Caco-2 (cell line): ENCODE measurements at regions of chr4 and their contacts with region 1.

Region 1: DNA sequence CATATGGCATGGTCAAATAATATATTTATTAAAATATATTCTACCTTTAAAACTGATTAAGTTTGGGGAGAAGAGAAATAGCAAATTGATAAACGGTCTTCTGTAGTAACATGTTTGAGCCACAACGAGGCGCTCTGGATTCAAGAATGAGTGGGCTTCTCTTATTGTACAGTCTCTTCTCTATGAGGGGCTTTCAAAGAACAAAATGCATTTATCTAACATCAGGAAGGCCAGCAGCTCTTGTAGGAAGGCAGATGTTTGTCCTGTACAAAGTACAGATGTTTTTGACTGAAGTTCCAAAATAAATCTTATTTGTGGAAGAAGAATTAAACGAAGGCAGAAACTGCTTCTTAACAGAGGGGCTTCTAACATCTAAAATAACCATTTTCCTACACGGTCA is 153.6 kb downstream of the RASL11B start:
- DNase-seq: peak in 1 of 2 experiments; percentile 44
- H3K4me3 ChIP-seq: no peak overlapping the region
- H3K4me3 Mint-ChIP-seq: no peak overlapping the region
- H3K27ac Mint-ChIP-seq: no peak overlapping the region
- H3K4me1 ChIP-seq: peaks cover 38% of the 10 kb centered on the region
- H3K4me1 Mint-ChIP-seq: peaks cover 13% of the 10 kb centered on the region
- H3K27me3 ChIP-seq: no peaks in the 10 kb centered on the region
- H3K27me3 Mint-ChIP-seq: no peaks in the 10 kb centered on the region
- CTCF ChIP-seq: peak; percentile 70 to 74

Region 2: DNA sequence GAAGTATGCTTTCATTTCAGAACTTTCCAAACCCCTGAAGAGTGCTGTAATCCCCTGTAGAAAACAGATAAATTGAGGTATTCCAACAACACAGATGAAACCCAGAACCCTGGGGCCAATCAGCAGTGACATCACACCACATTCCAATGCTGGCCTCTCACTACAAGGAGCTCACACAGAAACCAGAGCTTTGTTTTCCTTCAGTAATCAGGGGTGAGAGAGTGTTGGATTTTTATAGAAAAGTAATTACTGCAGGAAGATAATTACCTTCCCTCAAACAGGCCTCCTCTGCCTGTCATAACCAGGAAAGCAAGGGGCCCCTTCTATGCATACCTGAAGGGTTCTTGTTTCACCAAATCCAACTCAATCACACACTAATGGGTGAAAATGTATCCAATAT is 104.0 kb after region 1 on chr4:
- CTCF ChIA-PET with region 1: no interaction called
- POLR2A ChIA-PET with region 1: interaction called, 5 read pairs
- intact Hi-C with region 1: loop called (anchors 1 kb)
- DNase-seq: peak; percentile 65 to 75
- H3K4me3 ChIP-seq: no peak overlapping the region
- H3K4me3 Mint-ChIP-seq: no peak overlapping the region
- H3K27ac Mint-ChIP-seq: peak overlapping the region; percentile 79
- H3K4me1 ChIP-seq: peaks cover 37% of the 10 kb centered on the region
- H3K4me1 Mint-ChIP-seq: no peaks in the 10 kb centered on the region
- H3K27me3 ChIP-seq: no peaks in the 10 kb centered on the region
- H3K27me3 Mint-ChIP-seq: no peaks in the 10 kb centered on the region
- CTCF ChIP-seq: no peak

Region 3: GRCh38 chr4:53313510-53313909 is 297.8 kb after region 1 on chr4:
- CTCF ChIA-PET with region 1: no interaction called
- POLR2A ChIA-PET with region 1: no interaction called
- intact Hi-C with region 1: loop called (anchors 1 kb)
- DNase-seq: peak; percentile 38 to 48
- H3K4me3 ChIP-seq: no peak overlapping the region
- H3K4me3 Mint-ChIP-seq: no peak overlapping the region
- H3K27ac Mint-ChIP-seq: no peak overlapping the region
- H3K4me1 ChIP-seq: no peaks in the 10 kb centered on the region
- H3K4me1 Mint-ChIP-seq: peaks cover 13% of the 10 kb centered on the region
- H3K27me3 ChIP-seq: no peaks in the 10 kb centered on the region
- H3K27me3 Mint-ChIP-seq: no peaks in the 10 kb centered on the region
- CTCF ChIP-seq: peak in 1 of 2 experiments; percentile 54

Region 4: GRCh38 chr4:53459548-53459947 is 443.9 kb after region 1 on chr4:
- CTCF ChIA-PET with region 1: no interaction called
- POLR2A ChIA-PET with region 1: no interaction called
- intact Hi-C with region 1: loop called (anchors 10 kb)
- DNase-seq: peak; percentile 59 to 60
- H3K4me3 ChIP-seq: no peak overlapping the region
- H3K4me3 Mint-ChIP-seq: peak overlapping the region; percentile 34
- H3K27ac Mint-ChIP-seq: peak overlapping the region; percentile 75
- H3K4me1 ChIP-seq: peaks cover 50% of the 10 kb centered on the region
- H3K4me1 Mint-ChIP-seq: peaks cover 20% of the 10 kb centered on the region
- H3K27me3 ChIP-seq: no peaks in the 10 kb centered on the region
- H3K27me3 Mint-ChIP-seq: no peaks in the 10 kb centered on the region
- CTCF ChIP-seq: no peak

Region 5: GRCh38 chr4:53614591-53614990 is 598.9 kb after region 1 on chr4:
- CTCF ChIA-PET with region 1: no interaction called
- POLR2A ChIA-PET with region 1: no interaction called
- intact Hi-C with region 1: loop called (anchors 1 kb)
- DNase-seq: peak; percentile 63
- H3K4me3 ChIP-seq: no peak overlapping the region
- H3K4me3 Mint-ChIP-seq: no peak overlapping the region
- H3K27ac Mint-ChIP-seq: no peak overlapping the region
- H3K4me1 ChIP-seq: peaks cover 21% of the 10 kb centered on the region
- H3K4me1 Mint-ChIP-seq: no peaks in the 10 kb centered on the region
- H3K27me3 ChIP-seq: no peaks in the 10 kb centered on the region
- H3K27me3 Mint-ChIP-seq: no peaks in the 10 kb centered on the region
- CTCF ChIP-seq: peak; percentile 46

Region 6: DNA sequence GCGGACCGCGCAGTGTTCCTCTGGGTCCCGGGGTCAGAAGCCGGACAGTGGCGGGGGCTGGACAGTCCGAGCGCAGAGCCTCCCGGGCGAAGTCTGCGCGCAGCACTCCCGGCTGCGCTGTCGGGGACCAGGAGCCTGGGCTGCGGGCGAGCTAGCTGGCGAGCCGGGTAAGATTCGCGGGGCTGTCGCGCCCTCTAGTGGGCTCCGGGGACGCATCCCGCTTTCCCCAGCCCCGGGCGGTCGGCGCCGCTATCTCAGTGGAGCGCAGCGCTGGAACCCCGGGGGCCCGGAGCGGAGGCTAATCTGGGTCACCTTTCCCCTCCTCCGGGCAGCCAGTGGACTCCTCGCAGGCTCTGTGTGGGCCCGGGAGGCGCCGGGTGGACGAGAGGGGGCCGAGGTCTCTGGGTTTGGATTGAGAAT is 1217.6 kb after region 1 on chr4:
- CTCF ChIA-PET with region 1: interaction called, 9 read pairs
- POLR2A ChIA-PET with region 1: no interaction called
- intact Hi-C with region 1: loop called (anchors 2 kb)
- DNase-seq: peak; percentile 80 to 87
- H3K4me3 ChIP-seq: peak overlapping the region; percentile 75
- H3K4me3 Mint-ChIP-seq: peak overlapping the region; percentile 87
- H3K27ac Mint-ChIP-seq: no peak overlapping the region
- H3K4me1 ChIP-seq: peaks cover 6% of the 10 kb centered on the region
- H3K4me1 Mint-ChIP-seq: peaks cover 9% of the 10 kb centered on the region
- H3K27me3 ChIP-seq: no peaks in the 10 kb centered on the region
- H3K27me3 Mint-ChIP-seq: no peaks in the 10 kb centered on the region
- CTCF ChIP-seq: peak in 1 of 2 experiments; percentile 77